Activated CD4-positive, alpha-beta T cell treated with anti-CD3 and anti-CD28 coated beads, Interleukin-2, amount 10 ng/mL, durations not matched to agents 24 days and 14 days (primary cell): ENCODE measurements at regions of chr17 and their contacts with region 1.

Region 1: GRCh38 chr17:17849845-17850373 is 13.1 kb upstream of the SREBF1 start:
- DNase-seq: peak; percentile 93
- H3K4me3 Mint-ChIP-seq: peak overlapping the region; percentile 64
- H3K27ac Mint-ChIP-seq: peak overlapping the region; percentile 97
- H3K4me1 Mint-ChIP-seq: peaks cover 66% of the 10 kb centered on the region
- H3K27me3 Mint-ChIP-seq: no peaks in the 10 kb centered on the region

Region 2: GRCh38 chr17:17663160-17664063 is 186.5 kb before region 1 on chr17:
- intact Hi-C with region 1: no loop called
- DNase-seq: peak; percentile 89
- H3K4me3 Mint-ChIP-seq: peak overlapping the region; percentile 17
- H3K27ac Mint-ChIP-seq: peak overlapping the region; percentile 27
- H3K4me1 Mint-ChIP-seq: peaks cover 13% of the 10 kb centered on the region
- H3K27me3 Mint-ChIP-seq: no peaks in the 10 kb centered on the region

Region 3: DNA sequence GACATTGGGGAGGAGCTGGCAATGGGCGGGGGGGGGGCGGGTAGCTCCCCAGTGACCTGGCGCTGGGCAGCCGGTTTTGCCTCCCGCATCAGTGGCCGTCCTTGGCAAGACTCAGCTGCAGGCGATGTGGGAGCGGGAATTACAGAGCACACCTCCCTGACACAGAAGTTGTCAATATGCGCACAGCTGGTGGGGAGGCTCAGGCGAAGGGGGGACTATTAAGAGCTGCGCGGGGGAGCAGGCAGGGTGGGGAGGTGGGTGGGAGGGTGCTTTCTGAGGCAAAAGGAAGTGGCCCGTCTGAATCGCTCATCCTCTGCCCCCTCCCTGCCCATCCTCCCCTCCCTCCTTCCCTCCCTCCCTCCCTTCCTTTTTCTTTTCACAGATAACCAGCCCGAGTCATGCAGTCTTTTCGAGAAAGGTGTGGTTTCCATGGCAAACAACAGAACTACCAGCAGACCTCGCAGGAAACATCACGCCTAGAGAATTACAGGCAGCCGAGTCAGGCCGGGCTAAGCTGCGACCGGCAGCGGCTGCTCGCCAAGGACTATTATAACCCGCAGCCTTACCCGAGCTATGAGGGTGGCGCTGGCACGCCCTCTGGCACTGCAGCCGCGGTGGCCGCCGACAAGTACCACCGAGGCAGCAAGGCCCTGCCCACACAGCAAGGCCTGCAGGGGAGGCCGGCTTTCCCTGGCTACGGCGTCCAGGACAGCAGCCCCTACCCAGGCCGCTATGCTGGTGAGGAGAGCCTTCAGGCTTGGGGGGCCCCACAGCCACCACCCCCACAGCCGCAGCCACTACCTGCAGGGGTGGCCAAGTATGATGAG is 57.1 kb before region 1 on chr17:
- intact Hi-C with region 1: no loop called
- DNase-seq: peak; percentile 92
- H3K4me3 Mint-ChIP-seq: peak overlapping the region; percentile 58
- H3K27ac Mint-ChIP-seq: peak overlapping the region; percentile 74
- H3K4me1 Mint-ChIP-seq: peaks cover 17% of the 10 kb centered on the region
- H3K27me3 Mint-ChIP-seq: no peaks in the 10 kb centered on the region

Region 4: DNA sequence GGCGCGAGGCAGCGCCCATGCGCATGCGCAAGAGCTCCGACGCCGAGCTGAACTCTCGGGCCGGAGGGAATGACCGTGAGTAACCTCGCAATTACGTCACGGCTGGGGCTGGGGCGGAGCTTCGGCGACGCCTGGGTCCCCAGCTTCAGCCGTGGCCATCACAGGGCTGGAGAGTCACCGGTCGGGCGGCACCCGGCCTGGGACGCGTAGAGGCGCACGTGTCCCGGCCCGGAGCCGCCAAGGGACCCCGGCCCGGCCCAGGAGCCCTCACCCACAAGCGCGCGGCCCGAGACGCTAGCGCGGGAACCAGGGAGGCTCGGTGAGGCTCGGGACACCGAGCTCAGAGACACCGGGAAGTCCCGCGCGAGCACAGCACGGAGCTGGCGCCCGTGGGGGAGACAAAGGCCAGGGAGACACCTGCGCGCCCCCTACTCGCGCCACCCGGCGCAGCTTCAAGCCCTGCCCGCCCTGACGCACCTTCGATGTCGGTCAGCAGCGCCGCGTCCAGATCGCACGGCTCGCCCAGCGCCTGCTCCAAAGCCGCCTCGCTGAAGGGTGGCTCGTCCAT is 13.6 kb before region 1 on chr17:
- intact Hi-C with region 1: loop called (anchors 1 kb)
- DNase-seq: peak; percentile 99
- H3K4me3 Mint-ChIP-seq: peak overlapping the region; percentile 98
- H3K27ac Mint-ChIP-seq: peak overlapping the region; percentile 95
- H3K4me1 Mint-ChIP-seq: peaks cover 68% of the 10 kb centered on the region
- H3K27me3 Mint-ChIP-seq: no peaks in the 10 kb centered on the region

Region 5: GRCh38 chr17:18102640-18103039 is 252.7 kb after region 1 on chr17:
- intact Hi-C with region 1: no loop called
- DNase-seq: no peak
- H3K4me3 Mint-ChIP-seq: no peak overlapping the region
- H3K27ac Mint-ChIP-seq: no peak overlapping the region
- H3K4me1 Mint-ChIP-seq: no peaks in the 10 kb centered on the region
- H3K27me3 Mint-ChIP-seq: no peaks in the 10 kb centered on the region